Sciatic nerve (tissue), 2 donors: ENCODE measurements at regions of chr5 and their contacts with region 1.

Region 1: DNA sequence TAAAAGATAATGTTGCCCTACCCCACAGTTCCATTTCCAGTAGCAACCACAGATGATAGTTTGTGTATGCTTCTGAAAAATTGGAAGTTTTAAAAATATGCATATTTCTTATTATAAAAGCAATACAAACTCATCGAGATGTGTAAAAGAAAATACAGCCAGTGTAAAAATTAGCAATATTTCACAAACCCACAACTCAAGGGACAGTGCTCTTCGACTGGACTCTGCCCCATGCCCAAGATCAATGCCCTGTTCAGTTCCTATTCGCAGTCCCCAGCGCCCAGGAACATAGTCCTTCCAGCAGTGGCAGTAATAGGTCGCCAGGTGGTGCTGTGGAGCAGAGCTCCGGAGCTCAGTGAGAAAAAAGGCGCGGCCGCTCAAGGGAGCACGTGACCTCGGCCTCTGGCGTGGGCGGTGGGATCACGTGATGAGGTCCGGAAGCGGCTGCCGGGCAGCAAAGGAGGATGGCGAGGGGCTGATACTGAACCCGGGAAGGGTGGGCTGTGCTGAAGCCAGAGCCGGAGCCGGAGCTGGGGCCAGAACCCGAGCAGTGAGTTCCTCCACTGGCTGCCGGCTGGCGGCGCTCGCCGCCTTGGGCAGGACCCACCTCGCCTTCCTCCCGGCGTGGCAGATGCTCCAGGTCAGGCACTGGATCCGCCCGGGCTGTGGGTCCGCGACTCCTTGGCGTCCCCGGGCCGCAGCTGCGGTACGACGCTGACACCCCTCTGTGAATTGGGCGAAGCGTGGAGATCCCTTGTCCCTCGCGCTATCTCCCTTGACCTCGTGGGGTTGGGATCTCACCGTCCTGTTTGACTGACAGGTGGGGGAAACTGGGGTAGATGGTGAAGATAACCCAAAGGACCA is at the start of gene SLC36A1:
- DNase-seq: peak; percentile 98
- ATAC-seq: peak; percentile 97
- total RNA-seq, gene SLC36A1: 24.9 TPM

Region 2: GRCh38 chr5:151740336-151740942 is 293.0 kb after region 1 on chr5:
- intact Hi-C with region 1: loop called (anchors 10 kb)
- DNase-seq: peak; percentile 75
- ATAC-seq: peak; percentile 87